ENCODE measurements at regions of chr13 and their contacts with region 1.

Region 1: GRCh38 chr13:39602614-39603366 is at the start of gene LHFPL6:
- ATAC-seq: peak; percentile 82 to 94 (median 90)
- H3K4me3 ChIP-seq: peak within 1 kb of the TSS; percentile 48 to 84 (median 78)
- H3K27ac ChIP-seq: peak within 1 kb of the TSS; percentile 20 to 33
- H3K4me1 ChIP-seq: peaks cover 8 to 16% of the 10 kb centered on the region in 2 donors
- total RNA-seq, gene LHFPL6: 6.0 to 143 (median 12.0) TPM

Region 2: DNA sequence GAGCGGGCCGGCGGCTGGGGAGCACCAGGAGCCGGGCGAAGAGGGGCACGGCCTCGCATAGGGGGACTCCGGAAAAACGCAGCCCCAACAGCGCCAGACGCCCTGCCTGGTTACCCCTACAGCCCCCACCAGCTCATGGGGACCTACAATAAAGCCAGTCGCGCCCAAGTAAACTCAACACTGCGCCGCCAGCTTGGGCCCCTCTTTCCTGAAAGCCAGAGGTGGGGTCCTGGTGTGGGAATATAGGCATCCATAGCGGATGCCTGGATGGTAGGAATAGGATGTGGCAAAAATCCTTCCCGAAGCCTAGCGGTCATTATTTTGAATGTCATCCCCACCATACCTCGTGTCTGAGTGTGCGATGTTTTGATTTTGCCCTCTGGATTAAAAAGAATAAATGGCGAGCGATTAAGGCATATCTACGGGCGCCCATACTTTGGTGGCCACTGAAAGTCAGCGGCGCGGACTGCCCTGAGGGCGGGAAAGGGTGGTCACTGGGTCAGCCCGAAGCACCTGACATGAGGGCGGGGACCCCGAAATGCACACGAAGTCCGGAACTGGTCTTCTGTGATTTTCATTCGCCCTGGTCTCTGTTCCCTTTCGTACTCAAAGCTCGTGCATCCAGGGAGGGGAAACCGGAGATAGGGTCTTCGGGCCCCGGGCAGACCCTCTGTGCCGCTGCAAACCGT is 564.8 kb before region 1 on chr13 and contains the starts of genes NHLRC3 and PROSER1:
- in situ Hi-C with region 1: loop called in 2 of 9 experiments (anchors 25 kb)
- ATAC-seq: peak; percentile 84 to 97 (median 96)
- H3K4me3 ChIP-seq: peak within 1 kb of the TSS; percentile 48 to 94 (median 57)
- H3K27ac ChIP-seq: peak within 1 kb of the TSS; percentile 98 to 99
- H3K4me1 ChIP-seq: peaks cover 20 to 28% of the 10 kb centered on the region in 2 donors
- total RNA-seq, gene NHLRC3: 14.4 to 35.4 (median 20.2) TPM
- total RNA-seq, gene PROSER1: 6.3 to 43.2 (median 14.1) TPM

Region 3: GRCh38 chr13:39051157-39051556 is 551.6 kb before region 1 on chr13:
- in situ Hi-C with region 1: loop called in 3 of 9 experiments (anchors 25 kb)
- ATAC-seq: peak in 2 of 8 experiments; percentile 29 to 57
- H3K4me3 ChIP-seq: no peak overlapping the region
- H3K27ac ChIP-seq: no peak overlapping the region
- H3K4me1 ChIP-seq: peaks cover 0 to 2% of the 10 kb centered on the region in 2 donors

Region 4: GRCh38 chr13:39144941-39145533 is 457.8 kb before region 1 on chr13:
- in situ Hi-C with region 1: loop called in 6 of 9 experiments (anchors 10 to 25 kb)
- ATAC-seq: peak in 6 of 8 experiments; percentile 37 to 79 (median 45)
- H3K4me3 ChIP-seq: no peak overlapping the region
- H3K27ac ChIP-seq: no peak overlapping the region
- H3K4me1 ChIP-seq: no peaks in the 10 kb centered on the region

Region 5: DNA sequence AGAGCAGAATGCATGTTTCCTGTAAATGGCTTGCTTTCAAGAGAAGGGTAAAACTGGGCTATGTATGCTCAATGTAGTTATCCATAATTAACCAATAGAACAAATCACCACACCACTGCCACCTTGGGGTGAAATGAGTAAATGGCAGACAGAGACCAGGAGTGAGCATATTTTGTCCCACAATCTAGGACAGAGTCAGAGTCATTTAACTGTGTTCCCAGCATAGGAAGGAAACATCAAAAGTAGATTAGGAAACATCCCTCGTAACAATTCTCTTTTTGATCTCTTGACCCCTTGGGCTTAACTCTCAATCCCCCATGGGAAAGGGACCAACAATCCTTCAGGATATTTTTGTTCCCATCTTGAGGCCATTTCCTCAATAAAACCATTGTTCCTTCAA is 339.8 kb before region 1 on chr13:
- in situ Hi-C with region 1: loop called in 2 of 9 experiments (anchors 25 kb)
- ATAC-seq: peak in 7 of 8 experiments; percentile 44 to 94 (median 77)
- H3K4me3 ChIP-seq: no peak overlapping the region
- H3K27ac ChIP-seq: no peak overlapping the region
- H3K4me1 ChIP-seq: peaks cover 0 to 5% of the 10 kb centered on the region in 2 donors

Region 6: GRCh38 chr13:39415008-39415802 is 187.6 kb before region 1 on chr13:
- in situ Hi-C with region 1: loop called in 2 of 9 experiments (anchors 25 kb)
- ATAC-seq: peak in 3 of 8 experiments; percentile 26 to 40 (median 31)
- H3K4me3 ChIP-seq: no peak overlapping the region
- H3K27ac ChIP-seq: no peak overlapping the region
- H3K4me1 ChIP-seq: peaks cover 44 to 58% of the 10 kb centered on the region in 2 donors